Naive thymus-derived CD4-positive, alpha-beta T cell (primary cell): ENCODE measurements at regions of chr15 and their contacts with region 1.

Region 1: GRCh38 chr15:63752075-63752684 is 81.6 kb downstream of the HERC1 start:
- DNase-seq: peak in 7 of 9 donors; percentile 39 to 70 (median 59)
- ATAC-seq: peak; percentile 93
- H3K4me3 ChIP-seq: no peak overlapping the region
- H3K4me3 Mint-ChIP-seq: no peak overlapping the region
- H3K27ac ChIP-seq: no peak overlapping the region
- H3K27ac Mint-ChIP-seq: peak overlapping the region in 7 of 9 donors; percentile 5 to 83 (median 63)
- H3K4me1 ChIP-seq: no peaks in the 10 kb centered on the region
- H3K4me1 Mint-ChIP-seq: peaks cover 0 to 9% (median 2%) of the 10 kb centered on the region in 7 donors
- H3K27me3 ChIP-seq: no peaks in the 10 kb centered on the region
- H3K27me3 Mint-ChIP-seq: no peaks in the 10 kb centered on the region

Region 2: GRCh38 chr15:63638839-63639238 is 113.3 kb before region 1 on chr15:
- CTCF ChIA-PET with region 1: no interaction called
- POLR2A ChIA-PET with region 1: no interaction called
- intact Hi-C with region 1: no loop called
- DNase-seq: no peak
- ATAC-seq: no peak
- H3K4me3 ChIP-seq: no peak overlapping the region
- H3K4me3 Mint-ChIP-seq: no peak overlapping the region
- H3K27ac ChIP-seq: no peak overlapping the region
- H3K27ac Mint-ChIP-seq: peak overlapping the region in 3 of 9 donors; percentile 26 to 72 (median 38)
- H3K4me1 ChIP-seq: no peaks in the 10 kb centered on the region
- H3K4me1 Mint-ChIP-seq: peaks cover 0 to 11% (median 0%) of the 10 kb centered on the region in 7 donors
- H3K27me3 ChIP-seq: no peaks in the 10 kb centered on the region
- H3K27me3 Mint-ChIP-seq: no peaks in the 10 kb centered on the region

Region 3: DNA sequence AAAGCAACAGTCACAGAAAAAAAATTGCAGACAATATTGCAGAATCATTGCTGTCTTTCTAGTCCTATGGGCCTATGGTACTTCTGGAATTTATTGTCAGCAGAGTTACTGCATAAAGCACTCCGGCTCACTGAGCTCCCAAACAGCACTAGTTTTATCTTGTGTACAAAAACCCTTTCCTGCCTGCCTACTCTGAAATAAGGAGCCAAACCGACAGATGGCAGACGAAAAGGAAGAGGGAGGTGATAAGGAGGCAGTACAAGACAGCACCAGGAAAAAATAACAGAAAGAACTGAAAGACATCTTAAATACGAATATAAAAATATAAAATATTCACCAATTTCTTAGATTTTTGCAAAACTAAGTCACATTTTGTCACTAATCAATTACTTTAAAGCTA is 66.0 kb after region 1 on chr15:
- CTCF ChIA-PET with region 1: interaction called, 7 read pairs
- POLR2A ChIA-PET with region 1: no interaction called
- intact Hi-C with region 1: loop called in 1 of 2 experiments (anchors 5 kb)
- DNase-seq: peak in 4 of 9 donors; percentile 18 to 40 (median 38)
- ATAC-seq: peak; percentile 44
- H3K4me3 ChIP-seq: no peak overlapping the region
- H3K4me3 Mint-ChIP-seq: peak overlapping the region in 9 of 10 donors; percentile 50 to 82 (median 65)
- H3K27ac ChIP-seq: peak overlapping the region; percentile 12
- H3K27ac Mint-ChIP-seq: peak overlapping the region in 4 of 9 donors; percentile 41 to 83 (median 78)
- H3K4me1 ChIP-seq: peaks cover 9 to 44% of the 10 kb centered on the region in 2 donors
- H3K4me1 Mint-ChIP-seq: peaks cover 54 to 91% (median 81%) of the 10 kb centered on the region in 7 donors
- H3K27me3 ChIP-seq: no peaks in the 10 kb centered on the region
- H3K27me3 Mint-ChIP-seq: no peaks in the 10 kb centered on the region

Region 4: DNA sequence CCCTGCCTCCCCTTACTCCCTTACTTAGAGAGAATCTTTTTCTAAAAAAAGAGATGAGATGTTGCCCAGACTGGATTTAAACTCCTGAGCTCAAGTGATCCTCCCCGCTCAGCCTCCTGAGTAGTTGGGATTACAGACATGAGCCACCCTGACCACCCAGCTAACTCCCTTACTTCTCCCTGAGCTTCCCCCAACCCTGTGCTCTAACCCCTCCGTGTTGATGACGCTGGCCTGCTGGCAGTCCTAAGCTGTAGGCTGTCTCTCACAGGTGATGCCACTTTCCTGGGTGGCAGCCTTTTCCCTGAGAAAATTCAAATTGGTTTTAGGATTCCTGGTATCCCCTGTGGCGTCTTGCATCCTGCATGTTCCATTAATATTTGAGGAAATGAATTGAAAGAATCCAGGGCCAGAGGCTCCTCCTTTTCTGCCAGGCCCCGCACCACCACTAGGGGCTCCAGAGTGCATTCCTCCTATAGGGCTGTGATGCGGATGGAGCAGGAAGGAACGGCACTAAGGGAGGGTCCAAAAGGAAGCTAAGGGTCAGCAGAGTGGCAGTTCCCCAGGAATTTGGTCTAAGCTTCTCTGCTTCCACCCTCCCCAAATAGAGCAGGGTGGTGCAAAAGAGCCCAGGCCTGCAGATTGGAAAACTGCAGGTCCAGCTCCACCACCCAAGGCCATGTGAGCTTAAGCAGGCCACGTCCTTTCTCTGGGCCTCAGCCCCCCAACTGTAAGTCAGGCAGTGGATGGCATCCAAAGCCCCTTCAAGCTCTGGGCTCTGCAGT is 193.0 kb after region 1 on chr15:
- CTCF ChIA-PET with region 1: interaction called, 5 read pairs
- POLR2A ChIA-PET with region 1: interaction called, 3 read pairs
- intact Hi-C with region 1: loop called in 1 of 2 experiments (anchors 1 kb)
- DNase-seq: peak; percentile 21 to 68 (median 48)
- ATAC-seq: peak; percentile 94
- H3K4me3 ChIP-seq: no peak overlapping the region
- H3K4me3 Mint-ChIP-seq: no peak overlapping the region
- H3K27ac ChIP-seq: no peak overlapping the region
- H3K27ac Mint-ChIP-seq: peak overlapping the region in 5 of 9 donors; percentile 5 to 75 (median 15)
- H3K4me1 ChIP-seq: peaks cover 0 to 6% of the 10 kb centered on the region in 2 donors
- H3K4me1 Mint-ChIP-seq: peaks cover 1 to 33% (median 6%) of the 10 kb centered on the region in 7 donors
- H3K27me3 ChIP-seq: no peaks in the 10 kb centered on the region
- H3K27me3 Mint-ChIP-seq: no peaks in the 10 kb centered on the region

Region 5: GRCh38 chr15:64046347-64047153 is 294.4 kb after region 1 on chr15 and contains the start of gene DAPK2:
- CTCF ChIA-PET with region 1: interaction called, 51 read pairs
- POLR2A ChIA-PET with region 1: no interaction called
- intact Hi-C with region 1: loop called (anchors 1 to 5 kb)
- DNase-seq: peak; percentile 29 to 83 (median 63)
- ATAC-seq: peak; percentile 91
- H3K4me3 ChIP-seq: peak within 1 kb of the TSS; percentile 55
- H3K4me3 Mint-ChIP-seq: peak within 1 kb of the TSS; percentile 74 to 85 (median 82)
- H3K27ac ChIP-seq: no peak within 1 kb of the TSS
- H3K27ac Mint-ChIP-seq: peak within 1 kb of the TSS in 5 of 9 donors; percentile 28 to 88 (median 61)
- H3K4me1 ChIP-seq: peaks cover 0 to 5% of the 10 kb centered on the region in 2 donors
- H3K4me1 Mint-ChIP-seq: peaks cover 5 to 30% (median 10%) of the 10 kb centered on the region in 7 donors
- H3K27me3 ChIP-seq: no peaks in the 10 kb centered on the region
- H3K27me3 Mint-ChIP-seq: peaks cover 4 to 41% (median 13%) of the 10 kb centered on the region in 5 donors
- total RNA-seq, gene DAPK2: 0.46 to 9.3 (median 4.2) TPM in 4 of 5 experiments, not detected in the other

Region 6: DNA sequence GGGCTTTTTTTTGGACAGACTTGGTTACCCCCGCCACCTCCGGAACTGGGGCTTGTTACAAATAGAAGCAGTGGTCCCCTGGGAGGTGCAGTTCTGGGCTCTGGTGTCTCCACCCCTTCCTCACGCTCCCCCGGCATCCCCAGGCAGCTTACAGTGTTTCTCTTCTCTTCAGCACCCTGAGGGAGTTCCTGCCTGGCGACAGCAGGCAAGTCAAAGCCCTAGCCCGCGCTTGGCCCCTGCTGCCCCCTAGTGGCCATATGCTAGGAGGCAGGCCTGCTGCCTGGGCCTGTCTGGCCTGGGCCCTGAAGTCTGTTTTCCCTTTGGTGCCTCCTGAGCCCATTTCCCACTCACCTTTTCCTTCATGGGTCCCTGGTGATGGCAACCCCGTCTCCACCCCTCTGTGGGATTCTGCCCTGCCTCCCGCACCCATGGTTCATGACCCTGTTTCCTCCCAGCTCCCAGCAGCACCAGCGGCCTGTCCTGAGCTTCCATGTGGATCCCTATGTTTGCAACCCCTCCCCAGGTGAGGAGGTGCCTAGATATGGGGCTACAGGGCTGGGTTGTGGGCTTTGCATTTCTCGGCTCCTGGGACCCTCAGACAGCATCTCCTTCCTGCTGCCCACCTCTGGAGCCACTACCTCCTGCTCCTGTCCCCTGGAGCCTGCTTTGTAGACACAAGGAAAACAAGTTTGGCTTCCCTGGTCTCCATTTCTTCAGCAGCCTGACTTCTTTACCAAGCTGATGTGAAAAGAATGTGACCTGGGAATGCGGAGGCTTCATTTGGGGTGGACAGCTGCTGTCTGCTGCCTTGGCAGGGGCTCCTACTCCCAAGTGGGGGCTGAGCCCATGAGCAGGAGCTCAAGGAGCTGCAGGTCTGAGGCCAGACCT is 401.5 kb after region 1 on chr15:
- CTCF ChIA-PET with region 1: no interaction called
- POLR2A ChIA-PET with region 1: no interaction called
- intact Hi-C with region 1: loop called in 1 of 2 experiments (anchors 5 kb)
- DNase-seq: peak; percentile 77 to 96 (median 88)
- ATAC-seq: peak; percentile 97
- H3K4me3 ChIP-seq: peak overlapping the region; percentile 34
- H3K4me3 Mint-ChIP-seq: peak overlapping the region; percentile 60 to 85 (median 79)
- H3K27ac ChIP-seq: peak overlapping the region; percentile 25
- H3K27ac Mint-ChIP-seq: peak overlapping the region in 6 of 9 donors; percentile 14 to 74 (median 31)
- H3K4me1 ChIP-seq: peaks cover 10 to 21% of the 10 kb centered on the region in 2 donors
- H3K4me1 Mint-ChIP-seq: peaks cover 30 to 48% (median 39%) of the 10 kb centered on the region in 7 donors
- H3K27me3 ChIP-seq: peaks cover 0 to 4% of the 10 kb centered on the region in 2 donors
- H3K27me3 Mint-ChIP-seq: peaks cover 0 to 16% (median 8%) of the 10 kb centered on the region in 5 donors